A549 (cell line): ENCODE measurements at regions of chr5 and their contacts with region 1.

Region 1: DNA sequence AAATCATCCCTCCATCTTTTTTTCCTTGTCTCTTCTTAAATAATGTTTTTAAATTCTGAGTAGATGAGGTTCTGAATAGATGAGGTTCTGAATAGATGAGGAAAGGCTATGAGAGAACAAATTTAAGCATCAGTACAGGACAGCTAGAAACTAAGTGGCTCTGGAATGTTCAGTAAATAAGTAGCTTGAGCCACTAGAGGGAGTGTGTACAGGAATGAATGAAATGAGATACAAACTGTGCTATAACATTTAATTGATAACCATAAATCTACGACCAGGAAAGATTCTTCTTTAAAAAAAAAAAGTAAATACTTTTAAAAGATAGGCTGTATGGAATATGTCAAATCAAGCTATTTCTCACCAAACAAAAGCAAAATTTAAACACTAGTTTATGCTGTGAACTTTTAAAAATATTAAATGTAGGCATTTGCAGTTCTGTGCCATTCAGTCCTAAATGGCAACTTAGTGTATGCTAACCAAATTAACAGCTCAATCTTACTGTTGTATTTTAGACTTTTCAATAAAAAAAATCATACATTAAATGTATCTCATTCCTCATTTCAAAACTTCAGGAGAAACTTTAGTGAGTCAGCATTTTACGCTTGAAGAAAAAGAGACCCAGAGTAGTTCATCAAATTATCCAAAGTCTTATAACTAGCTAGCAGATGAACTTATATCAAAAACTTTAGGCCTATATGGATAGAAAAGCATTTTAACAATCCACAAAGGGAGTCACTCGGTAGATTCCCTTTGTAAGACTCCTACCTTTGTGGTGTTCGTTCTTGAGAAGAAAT is 70.4 kb upstream of the SNX2 start:
- DNase-seq: peak; percentile 32 to 55
- ATAC-seq: peak; percentile 82 to 88; a peak in 5 of 6 replicates
- H3K4me3 ChIP-seq: no peak overlapping the region
- H3K27ac ChIP-seq: no peak overlapping the region
- H3K4me1 ChIP-seq: no peaks in the 10 kb centered on the region
- CTCF ChIP-seq: peak; percentile 67
- EP300 ChIP-seq: no peak
- POLR2A ChIP-seq: no peak
- RAD21 ChIP-seq: peak; percentile 38 to 50

Region 2: GRCh38 chr5:122673343-122673742 is 31.1 kb before region 1 on chr5:
- CTCF ChIA-PET with region 1: interaction called, 13 read pairs
- POLR2A ChIA-PET with region 1: no interaction called
- DNase-seq: no peak
- ATAC-seq: 0 out of 6 replicates have a peak, but pooled peaks of 1 of the 2 experiments have one; percentile 19
- H3K4me3 ChIP-seq: no peak overlapping the region
- H3K27ac ChIP-seq: no peak overlapping the region
- H3K4me1 ChIP-seq: no peaks in the 10 kb centered on the region
- CTCF ChIP-seq: no peak
- EP300 ChIP-seq: no peak
- POLR2A ChIP-seq: no peak
- RAD21 ChIP-seq: no peak

Region 3: GRCh38 chr5:122693963-122694362 is 10.5 kb before region 1 on chr5:
- CTCF ChIA-PET with region 1: interaction called, 12 read pairs
- POLR2A ChIA-PET with region 1: interaction called, 3 read pairs
- DNase-seq: no peak
- ATAC-seq: no peak
- H3K4me3 ChIP-seq: no peak overlapping the region
- H3K27ac ChIP-seq: no peak overlapping the region
- H3K4me1 ChIP-seq: no peaks in the 10 kb centered on the region
- CTCF ChIP-seq: no peak
- EP300 ChIP-seq: no peak
- POLR2A ChIP-seq: no peak
- RAD21 ChIP-seq: no peak